CD14-positive monocyte (primary cell): ENCODE measurements at regions of chr3 and their contacts with region 1.

Region 1: DNA sequence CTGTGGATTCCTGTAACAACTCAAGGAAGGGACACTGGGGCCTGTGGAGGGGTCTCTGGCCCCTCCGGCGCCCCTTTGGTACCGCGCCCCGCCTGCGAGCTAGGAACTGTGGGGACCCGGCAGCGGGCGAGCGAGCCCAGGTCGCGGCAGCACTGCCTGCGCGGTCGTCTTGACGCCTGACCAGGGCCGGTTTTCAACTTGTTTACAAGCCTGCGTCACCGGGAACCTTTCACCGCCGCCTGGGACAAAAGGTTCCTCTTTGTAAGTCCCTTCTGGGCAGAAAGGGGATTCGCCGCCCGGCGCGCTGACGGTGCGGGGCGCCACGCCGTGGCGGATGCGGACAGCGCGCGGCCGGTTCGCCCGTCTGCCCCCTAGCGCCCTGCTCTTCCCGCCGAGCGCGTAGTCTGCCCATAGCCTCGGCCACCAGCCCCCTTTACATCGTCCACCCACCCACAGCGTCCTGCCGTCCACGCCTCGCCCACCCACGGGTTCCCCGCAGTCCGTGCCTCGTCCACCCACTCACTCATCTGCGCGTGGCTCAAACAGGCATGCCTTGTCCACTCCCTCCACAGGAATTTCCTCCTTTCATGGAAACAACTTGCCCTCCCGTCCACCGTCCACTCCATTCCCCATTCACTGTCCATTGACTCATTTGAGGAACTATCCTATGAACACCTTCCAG is 5.5 kb upstream of the CFAP100 start:
- DNase-seq: peak; percentile 90 to 92 (median 91)
- H3K4me3 ChIP-seq: peak overlapping the region in 1 of 3 experiments; percentile 36
- H3K4me3 Mint-ChIP-seq: peak overlapping the region; percentile 51 to 72
- H3K27ac ChIP-seq: peak overlapping the region; percentile 38 to 40
- H3K27ac Mint-ChIP-seq: peak overlapping the region in 6 of 7 donors; percentile 31 to 81 (median 68)
- H3K4me1 ChIP-seq: peaks cover 0 to 8% of the 10 kb centered on the region in 2 donors
- H3K4me1 Mint-ChIP-seq: peaks cover 7% of the 10 kb centered on the region
- H3K27me3 ChIP-seq: peaks cover 6 to 30% of the 10 kb centered on the region in 2 donors
- H3K27me3 Mint-ChIP-seq: peaks cover 31 to 63% (median 48%) of the 10 kb centered on the region in 3 donors
- CTCF ChIP-seq: peak; percentile 95

Region 2: GRCh38 chr3:126134219-126134975 is 254.9 kb before region 1 on chr3:
- intact Hi-C with region 1: loop called (anchors 1 to 2 kb)
- DNase-seq: peak; percentile 16 to 39 (median 28)
- H3K4me3 ChIP-seq: no peak overlapping the region
- H3K4me3 Mint-ChIP-seq: peak overlapping the region in 1 of 2 donors; percentile 26
- H3K27ac ChIP-seq: no peak overlapping the region
- H3K27ac Mint-ChIP-seq: no peak overlapping the region
- H3K4me1 ChIP-seq: peaks cover 3 to 10% of the 10 kb centered on the region in 2 donors
- H3K4me1 Mint-ChIP-seq: peaks cover 8% of the 10 kb centered on the region
- H3K27me3 ChIP-seq: no peaks in the 10 kb centered on the region
- H3K27me3 Mint-ChIP-seq: peaks cover 9 to 13% (median 11%) of the 10 kb centered on the region in 3 donors
- CTCF ChIP-seq: peak; percentile 79

Region 3: GRCh38 chr3:126245811-126246727 is 143.2 kb before region 1 on chr3:
- intact Hi-C with region 1: loop called (anchors 5 to 10 kb)
- DNase-seq: peak; percentile 16 to 47 (median 46)
- H3K4me3 ChIP-seq: no peak overlapping the region
- H3K4me3 Mint-ChIP-seq: no peak overlapping the region
- H3K27ac ChIP-seq: no peak overlapping the region
- H3K27ac Mint-ChIP-seq: no peak overlapping the region
- H3K4me1 ChIP-seq: no peaks in the 10 kb centered on the region
- H3K4me1 Mint-ChIP-seq: no peaks in the 10 kb centered on the region
- H3K27me3 ChIP-seq: peaks cover under 1 to 3% of the 10 kb centered on the region in 2 donors
- H3K27me3 Mint-ChIP-seq: peaks cover 4 to 14% (median 11%) of the 10 kb centered on the region in 3 donors
- CTCF ChIP-seq: peak; percentile 69